KBM-7 (cell line): ENCODE measurements at regions of chr2 and their contacts with region 1.

Region 1: DNA sequence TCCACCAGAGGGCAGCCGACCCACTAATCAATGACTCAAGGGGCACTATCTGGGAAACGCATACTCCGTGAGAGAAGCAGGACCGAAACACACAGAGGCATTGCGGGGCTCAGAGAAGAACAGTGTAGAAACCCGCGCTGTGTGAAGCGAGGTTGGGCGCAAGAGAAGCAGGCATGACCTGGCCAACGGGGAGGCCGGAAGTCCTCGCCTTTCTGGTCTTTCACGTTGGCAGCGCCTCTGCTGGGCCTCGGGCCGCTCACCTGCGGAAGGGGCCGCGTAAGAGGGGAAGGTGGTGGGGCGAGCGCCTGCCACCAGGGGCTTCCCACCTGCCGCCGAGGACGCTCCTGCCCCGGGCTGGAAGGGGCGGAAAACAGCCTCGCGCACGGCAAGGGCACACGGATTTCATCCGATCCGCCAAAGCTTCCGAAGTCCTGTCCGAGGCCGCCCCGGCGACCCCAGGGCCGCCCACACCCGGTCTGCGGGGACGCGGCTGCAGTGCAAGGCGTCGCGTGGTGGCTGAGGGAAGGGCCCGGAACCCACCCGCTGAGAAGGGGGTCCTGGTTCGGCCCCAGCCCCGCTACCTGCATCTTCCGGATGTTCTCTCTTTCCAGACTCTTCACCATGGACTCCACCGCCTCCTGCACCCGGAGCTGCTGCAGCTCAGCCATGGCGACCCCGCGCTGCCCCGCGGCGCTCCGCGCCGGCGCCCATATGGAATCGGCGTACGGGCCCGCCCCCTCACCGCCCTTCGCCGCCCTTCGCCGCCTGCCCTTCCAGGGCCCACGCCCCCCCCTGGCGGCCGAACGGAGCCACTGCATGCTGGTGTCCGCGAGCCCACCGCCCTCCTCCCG is at the start of gene FAM136A:
- DNase-seq: peak; percentile 86

Region 2: DNA sequence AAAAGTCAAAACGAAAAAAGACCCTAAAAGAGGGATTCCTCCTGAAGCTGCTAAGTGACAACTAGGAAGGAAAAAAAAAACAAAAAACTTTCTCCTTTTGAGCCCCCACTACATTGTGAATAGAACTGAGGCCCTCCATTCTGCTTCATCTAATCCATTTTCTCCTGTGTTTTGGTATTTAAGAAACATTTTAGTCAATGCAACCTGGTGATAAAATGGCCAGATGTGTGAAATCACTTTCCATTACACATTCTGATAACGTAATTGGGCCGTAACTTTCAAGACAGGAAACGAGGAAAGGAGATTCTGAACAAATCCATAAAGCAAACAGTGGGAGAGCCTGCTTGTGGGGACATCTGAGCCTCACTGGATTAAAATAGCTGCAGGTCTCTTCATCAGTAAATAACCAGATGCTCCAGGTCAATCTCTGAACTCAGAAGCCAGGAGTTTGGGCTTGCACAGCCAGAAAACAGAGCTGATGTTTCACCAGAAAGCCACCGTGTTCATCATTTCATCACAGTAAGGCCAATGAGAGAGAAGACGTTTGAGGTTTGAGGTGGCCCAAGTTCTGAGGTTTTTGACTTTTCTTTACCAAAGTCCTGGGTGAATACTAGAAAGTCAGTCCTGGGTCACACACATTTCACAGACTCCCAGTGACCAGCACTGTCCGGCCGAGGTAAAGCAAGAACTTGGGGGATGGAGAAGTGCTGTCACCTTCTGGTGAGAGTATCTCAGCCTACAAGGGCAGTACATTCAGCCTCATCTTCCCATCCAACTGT is 204.2 kb after region 1 on chr2:
- in situ Hi-C with region 1: no loop called
- DNase-seq: no peak

Region 3: DNA sequence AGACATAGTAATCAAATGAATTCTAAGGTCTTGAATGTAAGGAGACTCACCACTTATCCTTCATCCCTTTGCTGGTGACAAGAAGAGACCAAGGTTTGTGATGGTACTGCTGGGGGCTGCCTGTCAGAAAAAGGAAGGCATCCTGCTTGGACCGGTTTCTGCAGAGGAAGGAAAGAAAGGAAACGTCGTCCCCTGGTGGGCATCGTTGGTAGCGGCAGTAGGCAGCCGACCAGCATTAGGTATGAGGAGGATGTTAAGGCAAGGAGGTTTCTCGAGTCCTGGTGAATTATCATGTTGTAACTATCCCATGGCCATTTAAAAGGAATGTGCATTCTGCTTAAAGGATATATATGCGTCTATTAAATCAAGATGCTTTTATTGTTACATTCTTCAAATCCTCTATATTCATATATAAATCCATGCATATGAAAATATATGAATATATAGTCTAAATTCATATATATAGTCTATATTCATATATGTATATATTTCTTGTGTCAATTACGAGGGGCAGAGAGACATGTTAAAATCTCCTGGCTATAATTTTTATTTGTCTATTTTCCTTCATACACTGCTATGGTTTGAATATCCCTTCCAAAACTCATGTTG is 346.4 kb after region 1 on chr2:
- in situ Hi-C with region 1: loop called (anchors 25 kb)
- DNase-seq: peak; percentile 88